Mammary epithelial cell (primary cell): ENCODE measurements at regions of chr7 and their contacts with region 1.

Region 1: GRCh38 chr7:98021588-98022351 is 31.8 kb upstream of the OCM2 start:
- DNase-seq: peak; percentile 49
- H3K4me3 ChIP-seq: no peak overlapping the region
- H3K27ac ChIP-seq: no peak overlapping the region
- H3K4me1 ChIP-seq: no peaks in the 10 kb centered on the region
- H3K27me3 ChIP-seq: no peaks in the 10 kb centered on the region
- CTCF ChIP-seq: peak; percentile 84 to 97

Region 2: GRCh38 chr7:98091061-98091460 is 69.3 kb after region 1 on chr7:
- CTCF ChIA-PET with region 1: interaction called, 10 read pairs
- dilution Hi-C with region 1: no loop called
- in situ Hi-C with region 1: no loop called
- intact Hi-C with region 1: no loop called
- DNase-seq: peak; percentile 78
- H3K4me3 ChIP-seq: no peak overlapping the region
- H3K27ac ChIP-seq: no peak overlapping the region
- H3K4me1 ChIP-seq: peaks cover 10% of the 10 kb centered on the region
- H3K27me3 ChIP-seq: no peaks in the 10 kb centered on the region
- CTCF ChIP-seq: no peak

Region 3: DNA sequence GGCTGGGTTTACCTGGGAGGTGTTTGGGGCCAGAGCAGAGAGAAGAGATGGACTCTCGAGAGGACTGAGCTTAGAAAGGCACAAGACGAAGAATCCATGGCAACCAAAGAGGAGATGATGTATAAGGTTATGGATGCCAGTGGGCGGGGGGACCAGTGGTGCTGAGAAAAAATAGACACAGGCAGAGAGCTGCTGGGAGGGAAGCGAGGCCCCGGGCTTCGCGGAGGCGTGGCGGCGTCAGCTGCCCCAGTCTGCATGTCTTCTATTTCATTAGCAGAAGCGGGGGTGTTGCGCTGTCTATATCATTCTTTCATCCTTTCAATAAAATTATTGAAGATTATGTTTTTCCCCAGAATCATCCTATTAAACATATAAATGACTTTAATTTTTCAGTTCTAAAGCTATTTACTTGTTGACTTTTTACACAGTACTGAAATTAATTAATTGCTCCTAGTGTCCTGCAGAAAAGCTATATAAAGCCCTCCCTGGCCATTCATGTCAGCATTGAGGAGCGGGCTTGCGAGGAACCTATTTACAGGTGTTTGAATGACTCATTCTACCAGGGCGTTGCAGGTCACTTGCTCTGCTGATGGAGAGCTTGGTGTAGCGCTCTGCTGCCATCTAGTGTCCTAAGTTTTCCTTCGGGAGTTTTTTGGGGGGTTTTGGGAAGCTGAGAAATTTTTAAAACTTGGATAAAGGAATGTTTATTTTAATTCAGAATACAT is 146.6 kb after region 1 on chr7:
- CTCF ChIA-PET with region 1: interaction called, 8 read pairs
- dilution Hi-C with region 1: loop called (anchors 5 kb)
- in situ Hi-C with region 1: loop called (anchors 5 kb)
- intact Hi-C with region 1: loop called (anchors 1 kb)
- DNase-seq: peak; percentile 64
- H3K4me3 ChIP-seq: no peak overlapping the region
- H3K27ac ChIP-seq: no peak overlapping the region
- H3K4me1 ChIP-seq: peaks cover 19% of the 10 kb centered on the region
- H3K27me3 ChIP-seq: no peaks in the 10 kb centered on the region
- CTCF ChIP-seq: peak; percentile 63 to 84

Region 4: DNA sequence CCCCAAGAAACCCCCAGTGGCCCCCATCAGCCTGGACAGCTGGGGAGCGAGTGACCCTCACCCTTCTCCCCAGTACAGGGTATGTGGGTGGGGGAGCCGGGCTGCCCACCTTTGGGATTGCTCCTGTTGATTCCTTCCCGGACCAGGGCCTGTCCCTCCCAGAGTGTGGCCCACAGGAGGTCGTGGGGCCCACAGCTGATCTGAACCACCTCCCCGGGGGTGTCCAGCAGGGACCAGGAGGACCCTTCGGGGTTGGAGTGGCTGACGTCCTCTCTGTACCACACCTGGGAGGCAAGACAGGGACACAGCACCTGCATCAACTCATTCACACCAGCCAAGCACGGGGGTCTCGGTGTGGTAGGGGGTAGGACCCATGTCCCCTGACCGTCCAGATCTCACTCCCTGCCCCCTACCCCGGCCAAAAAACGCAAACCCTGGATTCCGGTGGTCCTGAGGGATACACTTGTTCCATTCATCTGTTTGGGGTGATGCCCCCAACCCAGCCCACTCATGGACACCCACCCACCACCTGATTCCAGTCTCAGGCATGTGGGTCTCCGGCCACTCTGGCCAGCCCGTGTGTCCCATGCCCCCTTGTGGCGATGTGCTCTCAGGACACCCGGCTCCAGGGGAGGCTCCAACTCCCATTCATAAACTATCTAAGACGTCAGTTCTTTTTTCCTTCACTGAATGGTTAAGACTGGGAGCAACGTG is 219.3 kb after region 1 on chr7:
- CTCF ChIA-PET with region 1: no interaction called
- dilution Hi-C with region 1: no loop called
- in situ Hi-C with region 1: no loop called
- intact Hi-C with region 1: loop called (anchors 1 kb)
- DNase-seq: no peak
- H3K4me3 ChIP-seq: no peak overlapping the region
- H3K27ac ChIP-seq: no peak overlapping the region
- H3K4me1 ChIP-seq: no peaks in the 10 kb centered on the region
- H3K27me3 ChIP-seq: no peaks in the 10 kb centered on the region
- CTCF ChIP-seq: peak; percentile 47 to 67

Region 5: GRCh38 chr7:98878365-98879165 is 856.8 kb after region 1 on chr7 and contains the start of gene TRRAP:
- CTCF ChIA-PET with region 1: interaction called, 11 read pairs
- dilution Hi-C with region 1: no loop called
- in situ Hi-C with region 1: no loop called
- intact Hi-C with region 1: no loop called
- DNase-seq: peak; percentile 54
- H3K4me3 ChIP-seq: peak within 1 kb of the TSS; percentile 70 to 87 (median 81)
- H3K27ac ChIP-seq: peak within 1 kb of the TSS; percentile 67
- H3K4me1 ChIP-seq: peaks cover 12% of the 10 kb centered on the region
- H3K27me3 ChIP-seq: no peaks in the 10 kb centered on the region
- CTCF ChIP-seq: peak; percentile 40 to 76
- total RNA-seq, gene TRRAP: 18.3 to 29.1 TPM